Caco-2 (cell line): ENCODE measurements at regions of chr12 and their contacts with region 1.

Region 1: GRCh38 chr12:6944381-6945186 is 762 bp downstream of the C12orf57 start:
- DNase-seq: peak; percentile 97
- H3K4me3 ChIP-seq: peak overlapping the region; percentile 59
- H3K4me3 Mint-ChIP-seq: peak overlapping the region; percentile 88
- H3K27ac Mint-ChIP-seq: peak overlapping the region; percentile 99
- H3K4me1 ChIP-seq: peaks cover 18% of the 10 kb centered on the region
- H3K4me1 Mint-ChIP-seq: peaks cover 40% of the 10 kb centered on the region
- H3K27me3 ChIP-seq: no peaks in the 10 kb centered on the region
- H3K27me3 Mint-ChIP-seq: peaks cover 4% of the 10 kb centered on the region
- CTCF ChIP-seq: peak; percentile 93 to 96

Region 2: GRCh38 chr12:5442251-5443006 is 1502.2 kb before region 1 on chr12:
- CTCF ChIA-PET with region 1: no interaction called
- POLR2A ChIA-PET with region 1: no interaction called
- intact Hi-C with region 1: no loop called
- DNase-seq: peak; percentile 65 to 76
- H3K4me3 ChIP-seq: no peak overlapping the region
- H3K4me3 Mint-ChIP-seq: no peak overlapping the region
- H3K27ac Mint-ChIP-seq: no peak overlapping the region
- H3K4me1 ChIP-seq: no peaks in the 10 kb centered on the region
- H3K4me1 Mint-ChIP-seq: peaks cover 7% of the 10 kb centered on the region
- H3K27me3 ChIP-seq: no peaks in the 10 kb centered on the region
- H3K27me3 Mint-ChIP-seq: no peaks in the 10 kb centered on the region
- CTCF ChIP-seq: peak; percentile 82 to 90

Region 3: GRCh38 chr12:6723607-6724396 is 220.8 kb before region 1 on chr12 and contains the start of gene COPS7A:
- CTCF ChIA-PET with region 1: no interaction called
- POLR2A ChIA-PET with region 1: interaction called, 10 read pairs
- intact Hi-C with region 1: no loop called
- DNase-seq: peak; percentile 100
- H3K4me3 ChIP-seq: peak within 1 kb of the TSS; percentile 63
- H3K4me3 Mint-ChIP-seq: peak within 1 kb of the TSS; percentile 73
- H3K27ac Mint-ChIP-seq: peak within 1 kb of the TSS; percentile 80
- H3K4me1 ChIP-seq: peaks cover 11% of the 10 kb centered on the region; the same call in 1 of the 2 replicates
- H3K4me1 Mint-ChIP-seq: peaks cover 11% of the 10 kb centered on the region
- H3K27me3 ChIP-seq: no peaks in the 10 kb centered on the region
- H3K27me3 Mint-ChIP-seq: no peaks in the 10 kb centered on the region
- CTCF ChIP-seq: no peak
- total RNA-seq, gene COPS7A: 56.8 and 61.9 TPM in 2 replicates

Region 4: DNA sequence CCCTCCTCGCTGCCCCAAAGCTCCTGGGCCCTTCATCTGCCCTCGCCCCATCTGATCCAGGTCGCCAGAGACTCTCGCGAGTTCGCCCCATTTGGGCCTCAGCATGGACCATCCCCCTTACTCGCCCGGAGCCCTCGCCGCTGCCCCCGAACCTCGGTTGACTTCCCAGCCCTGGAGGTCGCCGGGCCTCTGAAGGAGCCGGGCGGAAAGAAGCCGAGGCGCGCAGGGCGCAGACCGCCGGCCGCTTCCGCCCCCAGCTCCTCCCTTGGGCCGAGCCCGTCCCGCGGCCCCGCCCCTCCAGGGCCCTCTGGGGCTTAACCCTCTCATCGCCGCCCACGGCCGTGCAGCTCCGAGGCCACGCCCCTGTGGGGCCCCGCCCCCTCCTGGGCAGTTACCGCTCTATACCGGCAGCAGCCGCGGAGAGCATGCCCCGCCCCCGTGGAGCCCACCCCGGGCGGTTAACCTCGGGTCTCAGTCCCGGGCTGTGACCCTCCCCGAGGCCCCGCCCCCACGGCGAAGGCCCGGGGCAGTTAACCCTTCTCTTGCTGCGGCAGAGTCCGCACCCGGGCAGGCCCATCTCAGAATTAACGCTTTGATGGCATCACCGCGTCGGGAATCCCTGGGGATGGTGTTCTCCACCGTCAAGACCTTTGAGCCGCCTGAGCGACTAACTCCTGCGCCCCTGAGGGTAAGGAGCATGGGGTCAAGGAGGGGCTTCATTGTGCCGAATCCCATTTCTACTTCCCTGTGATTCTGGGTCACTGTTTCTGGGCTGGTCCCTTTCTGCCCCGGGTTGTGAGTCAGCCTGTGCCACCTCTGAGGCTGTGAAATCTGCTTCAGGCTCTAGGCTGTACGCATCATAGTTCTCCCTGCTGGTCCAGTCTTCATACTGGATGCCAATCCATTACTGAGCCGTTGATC is 71.2 kb before region 1 on chr12 and contains the start of gene SPSB2:
- CTCF ChIA-PET with region 1: interaction called, 25 read pairs
- POLR2A ChIA-PET with region 1: interaction called, 50 read pairs
- intact Hi-C with region 1: loop called (anchors 2 kb)
- DNase-seq: peak; percentile 100
- H3K4me3 ChIP-seq: peak within 1 kb of the TSS; percentile 89
- H3K4me3 Mint-ChIP-seq: peak within 1 kb of the TSS; percentile 98
- H3K27ac Mint-ChIP-seq: peak within 1 kb of the TSS; percentile 95
- H3K4me1 ChIP-seq: peaks cover 26% of the 10 kb centered on the region
- H3K4me1 Mint-ChIP-seq: peaks cover 47% of the 10 kb centered on the region
- H3K27me3 ChIP-seq: no peaks in the 10 kb centered on the region
- H3K27me3 Mint-ChIP-seq: no peaks in the 10 kb centered on the region
- CTCF ChIP-seq: no peak
- total RNA-seq, gene SPSB2: 23.7 and 24.7 TPM in 2 replicates

Region 5: GRCh38 chr12:6927379-6928024 is 17.1 kb before region 1 on chr12 and contains the start of gene ATN1:
- CTCF ChIA-PET with region 1: interaction called, 56 read pairs
- POLR2A ChIA-PET with region 1: interaction called, 22 read pairs
- intact Hi-C with region 1: loop called (anchors 1 kb)
- DNase-seq: peak; percentile 85 to 87
- H3K4me3 ChIP-seq: peak within 1 kb of the TSS; percentile 91
- H3K4me3 Mint-ChIP-seq: peak within 1 kb of the TSS; percentile 85
- H3K27ac Mint-ChIP-seq: peak within 1 kb of the TSS; percentile 76
- H3K4me1 ChIP-seq: peaks cover 43% of the 10 kb centered on the region
- H3K4me1 Mint-ChIP-seq: peaks cover 66% of the 10 kb centered on the region
- H3K27me3 ChIP-seq: no peaks in the 10 kb centered on the region
- H3K27me3 Mint-ChIP-seq: no peaks in the 10 kb centered on the region
- CTCF ChIP-seq: no peak
- total RNA-seq, gene ATN1: 126 TPM in 2 replicates

Region 6: GRCh38 chr12:7018350-7019042 is 73.9 kb after region 1 on chr12 and contains the start of gene LPCAT3:
- CTCF ChIA-PET with region 1: interaction called, 23 read pairs
- POLR2A ChIA-PET with region 1: interaction called, 15 read pairs
- intact Hi-C with region 1: loop called (anchors 1 kb)
- DNase-seq: peak; percentile 99 to 100
- H3K4me3 ChIP-seq: peak within 1 kb of the TSS; percentile 65
- H3K4me3 Mint-ChIP-seq: peak within 1 kb of the TSS; percentile 88
- H3K27ac Mint-ChIP-seq: peak within 1 kb of the TSS; percentile 72
- H3K4me1 ChIP-seq: peaks cover 19% of the 10 kb centered on the region
- H3K4me1 Mint-ChIP-seq: peaks cover 22% of the 10 kb centered on the region
- H3K27me3 ChIP-seq: no peaks in the 10 kb centered on the region
- H3K27me3 Mint-ChIP-seq: no peaks in the 10 kb centered on the region
- CTCF ChIP-seq: peak; percentile 95 to 96
- total RNA-seq, gene LPCAT3: 142 and 155 TPM in 2 replicates

Region 7: DNA sequence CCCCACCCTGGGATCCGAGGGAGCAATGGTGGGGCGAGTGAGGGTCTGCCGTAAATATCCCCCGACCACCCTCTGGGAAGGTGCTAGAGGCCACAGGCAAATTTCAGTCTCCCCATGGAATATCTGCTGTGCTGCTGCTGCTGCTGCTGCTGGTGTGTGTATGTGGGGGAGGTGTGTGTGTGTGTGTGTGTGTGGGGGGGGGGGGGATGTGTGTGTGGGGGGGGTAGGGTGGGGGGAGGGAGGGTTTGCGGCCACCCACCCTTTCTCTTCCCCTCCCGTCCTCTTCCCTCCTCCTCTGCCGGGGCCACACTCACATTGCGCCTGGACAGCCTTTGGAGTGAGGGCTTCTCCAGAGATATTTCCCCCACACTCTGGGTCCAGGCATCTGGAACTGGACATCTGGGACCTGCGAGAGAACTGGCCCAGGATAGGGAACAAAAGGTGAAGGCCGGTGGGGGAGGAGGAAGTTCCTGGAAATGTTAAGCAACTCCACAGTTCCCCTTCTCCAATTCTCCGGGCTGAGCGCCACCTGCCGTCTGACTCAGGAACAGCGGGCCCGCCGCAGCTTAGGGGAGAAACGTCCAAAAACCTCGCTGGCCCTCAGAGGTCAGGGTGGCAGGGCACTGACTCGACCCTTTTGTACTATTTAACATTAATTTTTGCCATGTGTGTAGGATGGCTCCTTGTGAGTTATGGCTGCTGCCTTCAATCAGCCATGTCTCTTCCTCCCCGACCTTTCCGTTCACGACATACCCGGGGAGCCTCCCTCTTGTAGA is 164.4 kb after region 1 on chr12 and contains the start of gene C1RL:
- CTCF ChIA-PET with region 1: interaction called, 58 read pairs
- POLR2A ChIA-PET with region 1: interaction called, 50 read pairs
- intact Hi-C with region 1: loop called (anchors 1 kb)
- DNase-seq: peak; percentile 92 to 96
- H3K4me3 ChIP-seq: peak within 1 kb of the TSS; percentile 80
- H3K4me3 Mint-ChIP-seq: peak within 1 kb of the TSS; percentile 85
- H3K27ac Mint-ChIP-seq: peak within 1 kb of the TSS; percentile 74
- H3K4me1 ChIP-seq: no peaks in the 10 kb centered on the region
- H3K4me1 Mint-ChIP-seq: peaks cover 12% of the 10 kb centered on the region
- H3K27me3 ChIP-seq: no peaks in the 10 kb centered on the region
- H3K27me3 Mint-ChIP-seq: no peaks in the 10 kb centered on the region
- CTCF ChIP-seq: peak; percentile 98 to 99
- total RNA-seq, gene C1RL: 38.7 and 40.2 TPM in 2 replicates